ENCODE measurements at regions of chr2 and their contacts with region 1.

Region 1: DNA sequence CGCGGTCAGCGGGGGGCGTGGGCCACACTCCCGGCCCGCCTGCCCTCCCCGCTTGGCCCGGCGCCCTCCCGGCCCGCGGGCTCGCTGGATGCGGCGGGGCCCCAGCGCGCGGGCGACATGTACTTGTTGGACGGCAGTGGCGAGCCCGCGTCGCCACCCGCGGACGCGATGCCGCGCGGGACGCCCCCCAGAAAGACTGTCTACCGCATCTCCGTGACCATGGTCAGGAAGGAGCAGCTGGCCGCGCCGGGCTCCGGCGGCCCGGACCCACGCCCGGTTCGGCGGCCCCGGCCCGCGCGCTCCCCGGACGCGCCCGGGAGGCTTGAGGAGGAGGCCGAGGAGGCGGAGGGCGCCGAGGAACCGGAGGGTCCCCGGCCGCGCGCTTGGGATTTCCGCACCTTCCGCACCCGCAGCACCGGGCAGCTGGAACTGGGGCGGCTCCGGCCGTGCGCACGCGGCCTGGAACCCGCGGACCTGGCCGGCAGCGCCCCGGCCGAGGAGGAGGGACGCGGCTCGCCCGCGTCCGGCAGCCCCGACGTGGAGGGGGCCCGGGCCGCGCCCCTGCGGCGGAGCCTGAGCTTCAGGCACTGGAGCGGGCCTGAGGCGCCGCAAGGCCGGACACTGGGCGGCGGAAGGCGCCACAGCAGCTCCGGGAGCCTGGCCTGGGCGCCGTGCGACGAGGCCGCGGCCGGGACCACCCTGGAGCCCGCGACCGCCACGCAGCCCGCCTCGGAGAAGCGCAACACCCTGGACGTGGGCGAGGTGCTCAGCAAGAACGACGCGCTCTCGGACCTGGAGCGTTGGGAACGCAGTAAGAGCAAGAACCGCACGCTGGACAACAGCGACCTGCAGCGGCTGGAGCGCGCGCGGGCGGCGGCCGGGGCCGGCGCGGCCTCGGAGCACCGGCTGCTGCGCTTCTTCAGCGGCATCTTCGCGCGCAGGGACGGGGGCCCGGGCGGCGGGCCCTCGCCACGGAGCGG is 176.4 kb downstream of the AGAP1 start:
- DNase-seq: no peak
- H3K4me3 Mint-ChIP-seq: no peak overlapping the region
- H3K27ac Mint-ChIP-seq: no peak overlapping the region
- H3K4me1 Mint-ChIP-seq: no peaks in the 10 kb centered on the region
- H3K27me3 Mint-ChIP-seq: peaks cover 53% of the 10 kb centered on the region

Region 2: GRCh38 chr2:235458839-235459273 is 211.4 kb before region 1 on chr2:
- intact Hi-C with region 1: no loop called
- DNase-seq: no peak
- H3K4me3 Mint-ChIP-seq: no peak overlapping the region
- H3K27ac Mint-ChIP-seq: no peak overlapping the region
- H3K4me1 Mint-ChIP-seq: no peaks in the 10 kb centered on the region
- H3K27me3 Mint-ChIP-seq: peaks cover 2% of the 10 kb centered on the region

Region 3: GRCh38 chr2:235493775-235494715 is 176.2 kb before region 1 on chr2 and contains the start of gene AGAP1:
- intact Hi-C with region 1: loop called (anchors 10 kb)
- DNase-seq: no peak
- H3K4me3 Mint-ChIP-seq: peak within 1 kb of the TSS; percentile 87
- H3K27ac Mint-ChIP-seq: peak within 1 kb of the TSS; percentile 80
- H3K4me1 Mint-ChIP-seq: peaks cover 10% of the 10 kb centered on the region
- H3K27me3 Mint-ChIP-seq: peaks cover 47% of the 10 kb centered on the region
- total RNA-seq, gene AGAP1: 2.0 and 2.9 TPM in 2 replicates

Measured in activated T-helper 1 cell treated with anti-CD3 and anti-CD28 coated beads, Interleukin-12 subunit alpha, Interleukin-12 subunit beta, Interleukin-2, Interleukin-4 antibody, amounts not matched to agents 30 ng/mL and 10 ng/mL and 1 ng/mL, durations not matched to agents 14 hours and 24 hours and 36 hours (primary cell).